Endothelial cell of umbilical vein (primary cell): ENCODE measurements at regions of chr7 and their contacts with region 1.

Region 1: GRCh38 chr7:36128448-36129047 is 24.5 kb upstream of the EEPD1 start:
- DNase-seq: peak; percentile 92
- H3K4me3 ChIP-seq: peak overlapping the region in 1 of 3 experiments; percentile 9
- H3K27ac ChIP-seq: no peak overlapping the region
- H3K4me1 ChIP-seq: no peaks in the 10 kb centered on the region
- H3K27me3 ChIP-seq: no peaks in the 10 kb centered on the region
- CTCF ChIP-seq: peak; percentile 43 to 60
- POLR2A ChIP-seq: no peak

Region 2: DNA sequence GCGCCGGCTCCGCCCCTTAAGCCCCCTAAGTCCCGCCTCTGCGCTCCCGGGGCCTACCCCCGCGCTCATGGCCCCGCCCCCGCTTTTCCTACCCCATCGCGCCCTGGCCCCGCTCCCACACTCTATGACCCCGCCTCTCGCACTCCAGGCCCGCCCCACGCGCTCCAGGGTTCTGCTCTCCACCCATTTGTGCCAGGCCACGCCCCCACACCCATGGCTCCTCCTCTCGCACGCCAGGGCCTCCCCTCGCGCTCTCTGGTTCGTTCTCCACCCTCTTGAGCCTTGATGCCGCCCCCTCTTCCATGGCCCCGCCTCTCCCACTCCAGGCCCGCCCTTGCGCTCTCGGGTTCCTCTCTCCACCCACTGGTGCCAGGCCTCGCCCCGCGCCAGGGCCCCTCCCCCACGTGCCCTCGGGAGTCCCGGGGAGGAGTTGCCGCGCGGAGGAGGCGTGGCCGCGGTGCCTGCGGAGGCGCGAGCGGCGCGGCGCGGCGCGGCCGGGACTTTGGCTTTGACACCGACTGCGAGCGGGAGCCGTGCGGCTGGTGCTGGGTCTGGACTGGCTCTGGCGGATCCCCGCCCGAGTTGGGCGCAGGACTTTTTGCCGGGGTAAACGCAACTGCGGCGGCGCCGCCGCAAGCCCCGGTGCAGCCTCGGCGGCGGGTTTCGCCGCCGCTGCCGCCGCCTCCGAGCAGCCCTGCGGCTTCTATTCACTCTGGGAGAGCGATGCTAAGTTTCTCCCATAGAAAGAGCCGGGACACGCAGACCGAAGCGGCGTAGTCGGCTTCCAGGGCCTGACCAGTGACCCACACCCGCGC is 24.4 kb after region 1 on chr7 and contains the start of gene EEPD1:
- CTCF ChIA-PET with region 1: interaction called, 6 read pairs
- POLR2A ChIA-PET with region 1: no interaction called
- dilution Hi-C with region 1: no loop called
- intact Hi-C with region 1: loop called (anchors 1 kb)
- DNase-seq: peak; percentile 99
- H3K4me3 ChIP-seq: peak within 1 kb of the TSS; percentile 51 to 60 (median 57)
- H3K27ac ChIP-seq: no peak within 1 kb of the TSS
- H3K4me1 ChIP-seq: peaks cover 4% of the 10 kb centered on the region
- H3K27me3 ChIP-seq: peaks cover 0 to 3% of the 10 kb centered on the region in 2 experiments
- CTCF ChIP-seq: no peak
- POLR2A ChIP-seq: no peak
- total RNA-seq, gene EEPD1: 0.23 and 0.42 TPM in 2 replicates

Region 3: DNA sequence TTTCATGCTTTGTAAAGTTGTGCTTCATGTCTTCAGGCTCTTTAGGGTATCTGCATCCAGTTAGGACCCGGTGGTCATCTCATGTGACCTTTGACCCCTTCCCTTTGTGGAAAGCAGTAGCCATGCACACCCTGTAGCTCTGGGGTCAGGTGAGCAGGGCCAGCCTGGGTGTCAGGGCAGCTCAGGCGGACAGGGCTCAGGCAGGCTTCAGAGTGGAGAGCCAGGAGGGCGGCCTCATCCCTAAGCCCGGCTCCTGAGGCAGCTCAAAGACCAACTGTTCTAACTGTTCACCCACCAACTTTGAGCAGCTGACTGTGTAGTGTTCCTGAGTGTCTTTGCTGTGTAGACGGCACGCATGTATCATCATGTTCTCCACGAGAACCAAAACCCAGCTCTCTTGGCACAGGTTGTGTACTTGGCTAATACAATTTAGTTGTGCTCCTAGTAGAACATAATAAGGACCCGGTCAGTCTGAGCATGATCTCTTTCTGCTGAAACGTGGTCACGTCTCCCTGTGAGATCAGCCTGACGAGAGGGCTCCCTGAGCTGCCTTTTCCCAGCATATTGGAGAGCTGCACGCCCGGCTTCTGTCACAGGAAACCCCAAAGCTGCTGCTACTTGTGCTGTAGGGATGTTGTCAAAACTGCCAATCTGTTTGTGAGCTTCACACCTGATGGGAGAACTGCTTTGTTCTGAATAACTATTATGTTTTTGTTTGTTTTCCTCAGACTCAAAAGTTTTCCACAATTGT is 54.5 kb after region 1 on chr7:
- CTCF ChIA-PET with region 1: interaction called, 5 read pairs
- POLR2A ChIA-PET with region 1: no interaction called
- dilution Hi-C with region 1: no loop called
- intact Hi-C with region 1: loop called (anchors 10 kb)
- DNase-seq: no peak
- H3K4me3 ChIP-seq: no peak overlapping the region
- H3K27ac ChIP-seq: no peak overlapping the region
- H3K4me1 ChIP-seq: no peaks in the 10 kb centered on the region
- H3K27me3 ChIP-seq: no peaks in the 10 kb centered on the region
- CTCF ChIP-seq: no peak
- POLR2A ChIP-seq: no peak

Region 4: GRCh38 chr7:36315309-36316133 is 187.0 kb after region 1 on chr7:
- CTCF ChIA-PET with region 1: no interaction called
- POLR2A ChIA-PET with region 1: no interaction called
- dilution Hi-C with region 1: no loop called
- intact Hi-C with region 1: no loop called
- DNase-seq: no peak
- H3K4me3 ChIP-seq: no peak overlapping the region
- H3K27ac ChIP-seq: no peak overlapping the region
- H3K4me1 ChIP-seq: peaks cover 5% of the 10 kb centered on the region
- H3K27me3 ChIP-seq: peaks cover 0 to 3% of the 10 kb centered on the region in 2 experiments
- CTCF ChIP-seq: no peak
- POLR2A ChIP-seq: no peak